Activated naive CD4-positive, alpha-beta T cell treated with anti-CD3 and anti-CD28 coated beads for 36 hours (primary cell): ENCODE measurements at regions of chr1 and their contacts with region 1.

Region 1: GRCh38 chr1:181142096-181142958 is 53.8 kb downstream of the IER5 start:
- DNase-seq: peak; percentile 93
- H3K4me3 Mint-ChIP-seq: peak overlapping the region; percentile 10
- H3K27ac Mint-ChIP-seq: peak overlapping the region; percentile 55
- H3K4me1 Mint-ChIP-seq: peaks cover 40% of the 10 kb centered on the region
- H3K27me3 Mint-ChIP-seq: no peaks in the 10 kb centered on the region

Region 2: GRCh38 chr1:180533266-180533987 is 608.9 kb before region 1 on chr1:
- CTCF ChIA-PET with region 1: no interaction called
- intact Hi-C with region 1: loop called (anchors 1 kb)
- DNase-seq: peak; percentile 87
- H3K4me3 Mint-ChIP-seq: no peak overlapping the region
- H3K27ac Mint-ChIP-seq: no peak overlapping the region
- H3K4me1 Mint-ChIP-seq: no peaks in the 10 kb centered on the region
- H3K27me3 Mint-ChIP-seq: no peaks in the 10 kb centered on the region

Region 3: DNA sequence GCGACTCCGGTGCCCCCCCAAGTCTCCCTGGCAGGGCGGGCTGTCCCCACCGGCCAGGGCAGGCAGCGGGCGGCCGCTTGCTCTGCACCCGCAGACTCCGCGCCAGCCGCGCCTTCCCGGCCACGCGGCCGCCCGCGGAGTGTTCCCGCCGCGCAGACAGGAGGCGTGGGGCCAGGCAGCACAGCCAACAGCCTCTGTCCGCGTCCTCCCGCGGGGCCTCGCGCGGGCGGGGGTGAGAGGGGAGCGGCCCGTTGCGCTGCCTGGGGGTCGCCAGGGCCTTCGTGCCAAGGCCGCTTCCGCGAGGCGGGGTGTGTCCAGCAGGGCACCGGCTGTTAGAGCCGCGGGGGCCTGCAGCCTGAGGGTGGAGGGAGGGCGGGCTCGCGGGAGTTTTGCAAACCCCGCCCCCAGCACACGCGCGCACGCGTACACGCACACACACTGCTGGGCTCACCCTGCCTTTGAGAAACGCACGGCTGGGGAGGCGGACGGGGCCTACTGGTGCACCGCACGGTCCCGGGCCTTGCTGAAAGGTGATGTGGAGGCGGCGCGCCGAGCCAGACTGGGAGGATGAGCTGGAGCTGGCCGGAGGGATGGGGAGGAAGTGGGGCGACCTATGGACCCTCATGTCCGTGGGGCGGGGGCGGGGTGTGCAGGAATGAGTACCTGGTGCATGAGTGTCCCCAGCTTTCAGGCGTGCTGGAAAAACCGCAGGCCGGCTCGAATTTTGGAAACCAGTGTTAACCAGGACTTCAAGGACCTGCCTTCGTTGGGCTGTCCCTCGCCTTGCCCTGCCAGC is 188.1 kb before region 1 on chr1:
- CTCF ChIA-PET with region 1: no interaction called
- intact Hi-C with region 1: loop called (anchors 5 kb)
- DNase-seq: peak; percentile 49
- H3K4me3 Mint-ChIP-seq: peak overlapping the region; percentile 27
- H3K27ac Mint-ChIP-seq: no peak overlapping the region
- H3K4me1 Mint-ChIP-seq: peaks cover 7% of the 10 kb centered on the region
- H3K27me3 Mint-ChIP-seq: no peaks in the 10 kb centered on the region

Region 4: GRCh38 chr1:181033799-181034451 is 108.4 kb before region 1 on chr1 and contains the start of gene MR1:
- CTCF ChIA-PET with region 1: interaction called, 158 read pairs
- intact Hi-C with region 1: loop called (anchors 1 kb)
- DNase-seq: peak; percentile 44
- H3K4me3 Mint-ChIP-seq: peak within 1 kb of the TSS; percentile 91
- H3K27ac Mint-ChIP-seq: peak within 1 kb of the TSS; percentile 100
- H3K4me1 Mint-ChIP-seq: peaks cover 49% of the 10 kb centered on the region
- H3K27me3 Mint-ChIP-seq: no peaks in the 10 kb centered on the region
- total RNA-seq, gene MR1: 22.5 to 25.0 TPM

Region 5: DNA sequence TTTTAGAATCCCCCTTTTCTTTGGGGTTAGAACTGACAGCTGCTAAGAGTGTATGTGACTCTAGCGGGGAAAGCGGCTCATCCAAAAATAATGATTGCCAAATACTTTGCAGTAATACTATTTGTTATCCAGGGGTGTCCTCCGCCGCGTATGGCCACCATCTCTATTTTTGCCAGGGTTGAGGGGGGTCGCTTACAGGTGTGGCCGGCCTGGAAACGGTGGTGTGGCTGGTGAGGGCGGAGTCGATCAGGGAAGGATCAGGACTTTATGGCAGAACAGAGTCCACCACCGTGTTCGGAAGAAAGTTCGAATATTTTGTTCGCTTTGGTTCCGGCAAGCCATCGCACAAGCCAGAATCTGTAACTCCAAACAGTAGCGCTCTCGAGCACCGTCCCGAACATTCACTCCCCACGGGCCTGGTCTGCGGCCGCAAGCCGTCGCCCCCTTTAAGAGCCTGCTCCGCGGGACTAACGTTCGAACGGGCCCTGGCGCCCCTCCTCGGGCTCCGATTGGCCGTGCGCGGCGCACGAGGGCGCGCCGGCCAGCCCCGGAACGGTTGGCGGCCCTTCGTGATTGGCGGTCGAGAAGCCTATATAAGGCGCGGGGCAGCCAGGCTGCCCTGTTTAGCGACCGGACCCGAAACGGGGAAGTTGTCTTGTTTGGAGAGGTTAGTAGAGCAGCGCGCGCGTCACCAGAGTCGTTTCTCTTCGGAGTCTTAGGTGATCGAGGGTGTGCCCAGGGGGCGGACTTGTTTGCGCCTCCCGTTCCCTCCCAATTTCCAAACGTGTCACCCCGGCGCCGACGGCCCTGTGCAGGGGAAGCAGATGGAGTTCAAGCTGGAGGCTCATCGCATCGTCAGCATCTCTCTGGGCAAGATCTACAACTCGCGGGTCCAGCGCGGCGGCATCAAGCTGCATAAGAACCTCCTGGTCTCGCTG is 54.0 kb before region 1 on chr1 and contains the start of gene IER5:
- CTCF ChIA-PET with region 1: interaction called, 129 read pairs
- intact Hi-C with region 1: loop called (anchors 1 kb)
- DNase-seq: peak; percentile 96
- H3K4me3 Mint-ChIP-seq: peak within 1 kb of the TSS; percentile 99
- H3K27ac Mint-ChIP-seq: peak within 1 kb of the TSS; percentile 99
- H3K4me1 Mint-ChIP-seq: peaks cover 44% of the 10 kb centered on the region
- H3K27me3 Mint-ChIP-seq: no peaks in the 10 kb centered on the region
- total RNA-seq, gene IER5: 33.5 to 34.4 TPM

Region 6: GRCh38 chr1:181128592-181129497 is 13.5 kb before region 1 on chr1:
- CTCF ChIA-PET with region 1: interaction called, 24 read pairs
- intact Hi-C with region 1: no loop called
- DNase-seq: no peak
- H3K4me3 Mint-ChIP-seq: no peak overlapping the region
- H3K27ac Mint-ChIP-seq: no peak overlapping the region
- H3K4me1 Mint-ChIP-seq: peaks cover 22% of the 10 kb centered on the region
- H3K27me3 Mint-ChIP-seq: peaks cover 6% of the 10 kb centered on the region